ENCODE measurements at regions of chr5 and their contacts with region 1.

Region 1: GRCh38 chr5:30401479-30402058 is 791.9 kb upstream of the CDH6 start:
- DNase-seq: peak; percentile 22 to 42 (median 35)
- H3K4me3 ChIP-seq: no peak overlapping the region
- H3K27ac ChIP-seq: no peak overlapping the region
- H3K4me1 ChIP-seq: no peaks in the 10 kb centered on the region
- H3K27me3 ChIP-seq: no peaks in the 10 kb centered on the region

Region 2: GRCh38 chr5:30343707-30344106 is 57.9 kb before region 1 on chr5:
- CTCF ChIA-PET with region 1: no interaction called
- POLR2A ChIA-PET with region 1: no interaction called
- DNase-seq: peak in 2 of 3 donors; percentile 0 to 1
- H3K4me3 ChIP-seq: no peak overlapping the region
- H3K27ac ChIP-seq: no peak overlapping the region
- H3K4me1 ChIP-seq: no peaks in the 10 kb centered on the region
- H3K27me3 ChIP-seq: no peaks in the 10 kb centered on the region

Region 3: DNA sequence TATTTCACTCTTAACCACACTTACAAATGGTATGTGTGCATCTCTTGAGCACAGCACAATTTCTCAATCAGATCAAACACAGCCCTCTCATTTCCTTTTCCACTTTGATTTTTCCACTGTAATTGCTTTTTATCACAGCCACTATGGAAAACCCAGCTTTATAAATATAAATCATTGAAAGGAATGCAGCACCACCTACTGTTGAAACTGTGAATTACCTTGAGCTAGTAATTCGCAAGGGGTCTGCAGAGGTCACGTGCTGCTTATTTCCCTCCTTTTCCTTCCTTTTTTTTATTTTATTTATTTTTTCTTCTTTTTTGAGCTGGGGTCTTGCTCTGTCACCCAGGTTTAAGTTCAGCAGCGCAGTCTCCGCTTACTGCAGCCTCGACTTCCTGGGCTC is 868.8 kb after region 1 on chr5:
- CTCF ChIA-PET with region 1: interaction called, 10 read pairs
- POLR2A ChIA-PET with region 1: no interaction called
- DNase-seq: peak; percentile 26 to 52 (median 45)
- H3K4me3 ChIP-seq: no peak overlapping the region
- H3K27ac ChIP-seq: no peak overlapping the region
- H3K4me1 ChIP-seq: no peaks in the 10 kb centered on the region
- H3K27me3 ChIP-seq: peaks cover 0 to 3% (median 0%) of the 10 kb centered on the region in 5 experiments